BJ (cell line): ENCODE measurements at regions of chr11 and their contacts with region 1.

Region 1: DNA sequence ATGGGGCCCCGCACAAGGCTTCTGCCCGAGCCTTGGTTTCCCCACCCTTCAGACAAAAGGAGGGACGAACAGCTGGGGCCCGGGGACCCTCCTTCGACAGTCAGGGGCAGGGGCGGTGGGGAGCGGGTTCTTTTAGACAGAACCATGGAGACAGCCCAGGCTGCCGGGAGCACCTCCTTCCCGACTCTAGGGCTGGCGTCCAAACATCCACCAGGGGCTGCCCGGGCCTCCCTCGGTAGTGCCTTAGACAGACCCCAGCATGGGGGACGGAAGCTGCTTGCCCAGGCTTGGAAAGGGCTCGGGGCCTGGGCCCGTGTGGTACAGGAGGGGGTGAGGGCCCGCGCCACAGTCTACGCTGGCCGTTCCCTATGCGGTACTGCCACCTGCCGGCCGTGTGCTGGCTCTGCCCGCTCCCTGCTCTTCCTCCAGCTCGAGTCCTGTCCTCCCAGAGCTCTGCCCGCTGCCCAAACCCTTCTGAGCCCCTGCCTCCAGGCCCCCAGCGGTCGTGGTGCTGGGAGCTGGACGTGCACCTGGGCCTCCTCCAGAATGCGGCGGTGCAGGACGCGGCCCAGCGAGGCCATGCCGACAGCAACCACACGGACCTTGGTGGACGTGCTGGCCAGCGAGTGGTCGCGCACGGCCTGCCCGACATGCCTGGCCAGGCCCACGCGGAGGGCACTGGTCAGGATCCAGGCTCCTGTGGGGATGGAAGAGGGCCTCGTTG is 20.1 kb downstream of the TSSC4 start:
- DNase-seq: no peak
- H3K4me3 ChIP-seq: no peak overlapping the region
- H3K27me3 ChIP-seq: no peaks in the 10 kb centered on the region
- CTCF ChIP-seq: peak; percentile 95

Region 2: DNA sequence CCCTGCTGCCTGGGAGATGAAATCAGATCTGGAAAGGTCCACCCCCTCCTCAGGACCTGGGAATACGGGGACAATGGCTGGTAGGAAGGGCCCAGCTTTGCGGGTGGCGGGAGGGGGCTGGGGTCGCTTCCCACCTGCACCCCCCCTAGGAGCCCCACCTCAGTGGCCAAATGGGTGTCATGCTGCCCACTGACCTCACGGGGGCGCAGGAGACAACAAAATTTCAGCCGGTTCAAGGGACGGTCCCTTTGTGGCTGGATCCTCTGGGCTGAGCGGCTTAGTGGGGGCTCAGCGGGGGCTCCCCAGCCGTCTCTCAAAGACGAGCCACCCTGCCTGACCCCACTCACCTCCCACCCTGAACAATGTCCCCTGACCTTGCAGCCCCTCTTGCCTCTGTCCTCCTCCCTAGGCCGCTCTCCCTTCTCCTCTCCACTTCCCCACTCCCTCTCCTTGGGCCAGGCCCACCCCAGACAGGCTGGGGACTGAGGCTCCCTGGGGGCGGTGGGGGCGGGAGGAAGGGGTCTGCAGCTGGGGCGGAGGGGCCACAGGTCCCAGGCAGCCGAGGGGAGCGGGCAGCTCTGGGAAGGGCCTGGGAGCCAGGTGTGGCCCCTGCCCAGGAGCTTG is 383.7 kb before region 1 on chr11:
- CTCF ChIA-PET with region 1: no interaction called
- POLR2A ChIA-PET with region 1: no interaction called
- DNase-seq: no peak
- H3K4me3 ChIP-seq: no peak overlapping the region
- H3K27me3 ChIP-seq: no peaks in the 10 kb centered on the region
- CTCF ChIP-seq: no peak

Region 3: GRCh38 chr11:2186669-2187279 is 233.9 kb before region 1 on chr11:
- CTCF ChIA-PET with region 1: interaction called, 75 read pairs
- POLR2A ChIA-PET with region 1: no interaction called
- DNase-seq: no peak
- H3K4me3 ChIP-seq: no peak overlapping the region
- H3K27me3 ChIP-seq: peaks cover 1% of the 10 kb centered on the region
- CTCF ChIP-seq: peak; percentile 46; the same call in 1 of the 2 replicates

Region 4: DNA sequence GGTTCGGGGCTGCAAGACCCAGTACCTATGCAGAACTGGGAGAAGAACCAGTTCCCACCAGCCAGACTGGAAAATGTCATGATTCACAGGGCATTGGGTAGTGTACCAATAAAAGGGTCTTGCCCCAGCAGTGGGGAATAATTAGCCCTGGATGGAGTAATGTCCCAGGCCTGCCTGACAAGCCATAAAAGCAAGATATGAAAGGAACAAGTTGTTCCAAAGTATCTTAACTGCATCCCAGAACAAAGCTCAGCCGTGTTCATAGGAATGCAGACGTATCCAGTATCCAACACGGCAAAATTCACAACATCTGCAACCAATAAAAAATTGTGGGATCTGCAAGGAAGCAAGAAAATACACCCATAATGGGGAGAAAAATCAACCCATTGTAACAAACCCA is 198.2 kb before region 1 on chr11:
- CTCF ChIA-PET with region 1: interaction called, 10 read pairs
- POLR2A ChIA-PET with region 1: no interaction called
- DNase-seq: no peak
- H3K4me3 ChIP-seq: no peak overlapping the region
- H3K27me3 ChIP-seq: peaks cover 1% of the 10 kb centered on the region
- CTCF ChIP-seq: no peak

Region 5: GRCh38 chr11:2305140-2305840 is 115.4 kb before region 1 on chr11:
- CTCF ChIA-PET with region 1: interaction called, 519 read pairs
- POLR2A ChIA-PET with region 1: interaction called, 15 read pairs
- DNase-seq: no peak
- H3K4me3 ChIP-seq: no peak overlapping the region
- H3K27me3 ChIP-seq: no peaks in the 10 kb centered on the region
- CTCF ChIP-seq: peak; percentile 97

Region 6: DNA sequence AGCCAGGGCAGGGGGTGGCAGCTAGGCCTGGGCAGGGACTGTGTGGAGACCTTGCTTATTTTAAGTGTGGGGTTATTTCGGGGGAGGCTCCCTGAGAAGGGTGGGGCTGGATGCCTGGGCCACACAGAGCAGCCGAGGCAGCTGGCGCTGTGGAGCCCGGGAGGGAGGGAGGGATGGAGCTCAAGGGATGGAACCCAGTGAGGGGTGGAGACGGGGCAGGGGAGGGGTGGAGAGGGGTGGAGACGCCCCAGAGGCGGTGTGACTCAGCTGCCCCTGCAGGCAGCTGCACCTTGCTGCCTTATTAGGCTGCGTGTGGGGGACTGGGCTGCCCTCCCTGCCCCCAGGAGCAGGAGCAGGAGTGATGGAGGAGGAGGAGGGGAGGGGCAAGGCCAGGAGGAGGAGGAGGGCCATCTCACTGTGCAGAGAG is 29.9 kb before region 1 on chr11:
- CTCF ChIA-PET with region 1: interaction called, 17 read pairs
- POLR2A ChIA-PET with region 1: no interaction called
- DNase-seq: no peak
- H3K4me3 ChIP-seq: no peak overlapping the region
- H3K27me3 ChIP-seq: no peaks in the 10 kb centered on the region
- CTCF ChIP-seq: no peak

Region 7: GRCh38 chr11:2526808-2527381 is 106.2 kb after region 1 on chr11:
- CTCF ChIA-PET with region 1: interaction called, 90 read pairs
- POLR2A ChIA-PET with region 1: no interaction called
- DNase-seq: no peak
- H3K4me3 ChIP-seq: no peak overlapping the region
- H3K27me3 ChIP-seq: peaks cover 2% of the 10 kb centered on the region; the same call in 1 of the 2 replicates
- CTCF ChIP-seq: peak; percentile 10; the same call in 1 of the 2 replicates